ENCODE measurements at regions of chr10 and their contacts with region 1.

Region 1: GRCh38 chr10:110610308-110610774 is 33.8 kb upstream of the RBM20 start:
- DNase-seq: peak; percentile 60
- ATAC-seq: peak; percentile 78
- H3K4me3 ChIP-seq: no peak overlapping the region
- H3K27ac ChIP-seq: no peak overlapping the region
- H3K4me1 ChIP-seq: no peaks in the 10 kb centered on the region
- H3K27me3 ChIP-seq: no peaks in the 10 kb centered on the region
- CTCF ChIP-seq: peak; percentile 78

Region 2: GRCh38 chr10:110512461-110513187 is 97.7 kb before region 1 on chr10:
- CTCF ChIA-PET with region 1: interaction called, 13 read pairs
- POLR2A ChIA-PET with region 1: no interaction called
- intact Hi-C with region 1: no loop called
- DNase-seq: peak; percentile 80
- ATAC-seq: peak; percentile 45
- H3K4me3 ChIP-seq: no peak overlapping the region
- H3K27ac ChIP-seq: peak overlapping the region; percentile 60
- H3K4me1 ChIP-seq: peaks cover 21% of the 10 kb centered on the region; the same call in 1 of the 2 replicates
- H3K27me3 ChIP-seq: no peaks in the 10 kb centered on the region
- CTCF ChIP-seq: no peak

Region 3: DNA sequence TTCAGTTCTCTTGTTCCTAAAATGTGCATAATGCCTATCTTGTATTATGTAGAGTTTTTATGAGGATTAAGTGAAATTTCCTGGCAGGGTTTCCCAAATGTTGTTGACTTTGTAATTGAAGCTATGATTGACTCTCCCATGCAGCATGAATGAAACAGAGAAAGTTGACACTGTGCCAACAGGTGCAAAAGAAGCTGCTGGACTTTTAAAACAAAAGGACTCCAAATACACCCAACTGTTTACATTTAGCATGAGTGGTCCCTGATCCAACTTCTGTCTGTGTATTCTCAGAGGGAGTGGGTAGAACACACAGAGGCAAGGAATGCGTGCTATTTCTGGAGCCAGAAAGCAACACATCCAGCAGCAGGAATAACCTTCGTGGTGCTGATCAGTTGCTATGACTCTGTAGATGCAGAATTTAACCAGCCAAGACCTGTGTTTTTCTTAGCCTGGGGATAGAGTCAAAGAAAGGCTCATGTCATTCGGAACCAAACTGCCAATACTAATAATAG is 19.4 kb after region 1 on chr10:
- CTCF ChIA-PET with region 1: no interaction called
- POLR2A ChIA-PET with region 1: no interaction called
- intact Hi-C with region 1: loop called (anchors 2 kb)
- DNase-seq: peak; percentile 98
- ATAC-seq: peak; percentile 97
- H3K4me3 ChIP-seq: no peak overlapping the region
- H3K27ac ChIP-seq: peak overlapping the region; percentile 80
- H3K4me1 ChIP-seq: peaks cover 22% of the 10 kb centered on the region
- H3K27me3 ChIP-seq: no peaks in the 10 kb centered on the region
- CTCF ChIP-seq: no peak

Region 4: GRCh38 chr10:110646417-110647135 is 36.2 kb after region 1 on chr10:
- CTCF ChIA-PET with region 1: no interaction called
- POLR2A ChIA-PET with region 1: no interaction called
- intact Hi-C with region 1: loop called (anchors 2 kb)
- DNase-seq: peak; percentile 13
- ATAC-seq: peak; percentile 11
- H3K4me3 ChIP-seq: peak overlapping the region; percentile 47
- H3K27ac ChIP-seq: 0 out of 2 replicates have a peak overlapping the region, but pooled peaks have one; percentile 14
- H3K4me1 ChIP-seq: peaks cover 23% of the 10 kb centered on the region
- H3K27me3 ChIP-seq: no peaks in the 10 kb centered on the region
- CTCF ChIP-seq: no peak

Region 5: DNA sequence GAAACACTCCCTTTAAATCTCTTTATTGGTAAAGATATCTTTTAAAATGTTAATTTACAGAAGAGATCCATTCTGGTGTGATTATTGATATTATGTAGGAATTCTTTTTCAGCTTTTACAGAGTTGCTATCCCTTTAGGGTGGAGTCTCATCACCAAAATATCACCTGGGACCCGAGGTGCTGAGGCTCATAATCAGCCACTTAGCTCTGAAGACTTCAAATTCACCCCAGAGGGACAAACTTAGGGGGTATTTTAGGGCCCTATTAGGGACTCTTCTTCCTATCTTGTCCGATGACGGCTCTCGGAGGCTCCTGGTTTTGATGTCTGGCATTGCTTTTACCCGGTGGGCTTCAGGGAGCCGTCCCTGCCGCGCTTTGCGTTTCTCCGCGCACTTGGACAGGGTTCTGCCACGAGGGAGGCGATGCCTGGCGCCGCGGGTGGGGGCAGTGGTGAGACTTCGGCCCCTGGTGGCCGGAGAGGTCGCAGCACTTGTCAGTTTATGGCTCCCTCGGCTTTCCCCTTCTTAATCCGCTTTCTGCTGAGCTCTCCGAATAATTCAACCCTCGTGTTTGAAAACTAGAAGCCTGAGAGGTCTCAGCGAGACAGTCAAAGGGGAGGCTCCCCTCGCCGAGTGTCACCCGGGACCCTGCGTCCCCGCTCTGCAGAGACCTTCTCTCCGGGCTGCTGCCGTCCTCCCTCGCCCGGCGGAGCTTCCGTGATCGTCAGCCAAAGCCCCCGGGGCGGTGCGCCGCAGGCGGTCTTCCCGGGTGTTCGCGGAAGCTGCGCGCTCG is 61.6 kb after region 1 on chr10:
- CTCF ChIA-PET with region 1: interaction called, 7 read pairs
- POLR2A ChIA-PET with region 1: no interaction called
- intact Hi-C with region 1: loop called (anchors 1 kb)
- DNase-seq: peak; percentile 68
- ATAC-seq: peak; percentile 97
- H3K4me3 ChIP-seq: peak overlapping the region; percentile 83
- H3K27ac ChIP-seq: no peak overlapping the region
- H3K4me1 ChIP-seq: peaks cover 6% of the 10 kb centered on the region
- H3K27me3 ChIP-seq: no peaks in the 10 kb centered on the region
- CTCF ChIP-seq: peak; percentile 81

Region 6: GRCh38 chr10:110893559-110894179 is 283.3 kb after region 1 on chr10:
- CTCF ChIA-PET with region 1: no interaction called
- POLR2A ChIA-PET with region 1: no interaction called
- intact Hi-C with region 1: loop called (anchors 5 kb)
- DNase-seq: peak; percentile 74
- ATAC-seq: peak; percentile 62
- H3K4me3 ChIP-seq: no peak overlapping the region
- H3K27ac ChIP-seq: no peak overlapping the region
- H3K4me1 ChIP-seq: 0 out of 2 replicates have a peak, but pooled peaks cover 5% of the 10 kb centered on the region
- H3K27me3 ChIP-seq: no peaks in the 10 kb centered on the region
- CTCF ChIP-seq: peak; percentile 65